ENCODE measurements at regions of chr17 and their contacts with region 1.

Region 1: GRCh38 chr17:13594762-13595598 is 6.7 kb downstream of the HS3ST3A1 start:
- DNase-seq: peak; percentile 84
- H3K4me3 Mint-ChIP-seq: no peak overlapping the region
- H3K27ac Mint-ChIP-seq: no peak overlapping the region
- H3K4me1 Mint-ChIP-seq: peaks cover 3% of the 10 kb centered on the region
- H3K27me3 Mint-ChIP-seq: peaks cover 19% of the 10 kb centered on the region

Region 2: GRCh38 chr17:13393841-13394710 is 200.9 kb before region 1 on chr17:
- CTCF ChIA-PET with region 1: no interaction called
- POLR2A ChIA-PET with region 1: no interaction called
- intact Hi-C with region 1: no loop called
- DNase-seq: no peak
- H3K4me3 Mint-ChIP-seq: no peak overlapping the region
- H3K27ac Mint-ChIP-seq: no peak overlapping the region
- H3K4me1 Mint-ChIP-seq: no peaks in the 10 kb centered on the region
- H3K27me3 Mint-ChIP-seq: no peaks in the 10 kb centered on the region

Region 3: GRCh38 chr17:13541032-13541480 is 53.9 kb before region 1 on chr17:
- CTCF ChIA-PET with region 1: no interaction called
- POLR2A ChIA-PET with region 1: no interaction called
- intact Hi-C with region 1: no loop called
- DNase-seq: no peak
- H3K4me3 Mint-ChIP-seq: no peak overlapping the region
- H3K27ac Mint-ChIP-seq: no peak overlapping the region
- H3K4me1 Mint-ChIP-seq: no peaks in the 10 kb centered on the region
- H3K27me3 Mint-ChIP-seq: peaks cover 16% of the 10 kb centered on the region

Region 4: DNA sequence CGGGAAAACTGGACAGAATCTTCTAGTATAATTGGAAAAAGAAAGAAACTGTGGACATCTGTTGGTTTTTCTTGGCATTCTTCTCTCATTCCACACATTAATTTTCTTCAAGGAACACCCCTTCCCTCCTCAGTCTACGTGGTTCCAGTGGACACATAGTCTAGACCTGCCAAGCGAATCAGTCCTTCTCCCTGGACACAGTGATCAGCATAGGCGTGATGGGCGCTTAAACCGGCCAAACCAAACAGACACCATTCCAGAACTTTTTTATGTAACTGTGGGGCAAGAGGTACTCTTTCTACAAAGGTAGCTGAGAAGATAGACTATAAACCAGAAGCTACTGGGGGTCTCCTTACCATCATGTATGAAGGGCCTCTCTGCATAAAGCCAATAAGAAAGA is 352.5 kb after region 1 on chr17:
- CTCF ChIA-PET with region 1: no interaction called
- POLR2A ChIA-PET with region 1: no interaction called
- intact Hi-C with region 1: no loop called
- DNase-seq: no peak
- H3K4me3 Mint-ChIP-seq: no peak overlapping the region
- H3K27ac Mint-ChIP-seq: no peak overlapping the region
- H3K4me1 Mint-ChIP-seq: no peaks in the 10 kb centered on the region
- H3K27me3 Mint-ChIP-seq: no peaks in the 10 kb centered on the region

Region 5: GRCh38 chr17:14069251-14070021 is 474.5 kb after region 1 on chr17 and contains the start of gene COX10:
- CTCF ChIA-PET with region 1: no interaction called
- POLR2A ChIA-PET with region 1: no interaction called
- intact Hi-C with region 1: loop called (anchors 10 kb)
- DNase-seq: peak; percentile 90
- H3K4me3 Mint-ChIP-seq: peak within 1 kb of the TSS; percentile 98
- H3K27ac Mint-ChIP-seq: peak within 1 kb of the TSS; percentile 89
- H3K4me1 Mint-ChIP-seq: peaks cover 58% of the 10 kb centered on the region
- H3K27me3 Mint-ChIP-seq: no peaks in the 10 kb centered on the region
- total RNA-seq, gene COX10: 22.9 to 23.6 TPM

Region 6: GRCh38 chr17:14553855-14554254 is 958.9 kb after region 1 on chr17:
- CTCF ChIA-PET with region 1: no interaction called
- POLR2A ChIA-PET with region 1: no interaction called
- intact Hi-C with region 1: loop called (anchors 5 kb)
- DNase-seq: no peak
- H3K4me3 Mint-ChIP-seq: no peak overlapping the region
- H3K27ac Mint-ChIP-seq: no peak overlapping the region
- H3K4me1 Mint-ChIP-seq: peaks cover 2% of the 10 kb centered on the region
- H3K27me3 Mint-ChIP-seq: peaks cover under 1% of the 10 kb centered on the region

Region 7: GRCh38 chr17:14813649-14814365 is 1218.8 kb after region 1 on chr17:
- CTCF ChIA-PET with region 1: no interaction called
- POLR2A ChIA-PET with region 1: no interaction called
- intact Hi-C with region 1: loop called (anchors 10 kb)
- DNase-seq: peak; percentile 32
- H3K4me3 Mint-ChIP-seq: no peak overlapping the region
- H3K27ac Mint-ChIP-seq: no peak overlapping the region
- H3K4me1 Mint-ChIP-seq: peaks cover 11% of the 10 kb centered on the region
- H3K27me3 Mint-ChIP-seq: peaks cover 14% of the 10 kb centered on the region

Measured in activated CD4-positive, alpha-beta memory T cell treated with anti-CD3 and anti-CD28 coated beads for 36 hours (primary cell).